Activated CD4-positive, alpha-beta T cell treated with anti-CD3 and anti-CD28 coated beads for 36 hours (primary cell): ENCODE measurements at regions of chr15 and their contacts with region 1.

Region 1: DNA sequence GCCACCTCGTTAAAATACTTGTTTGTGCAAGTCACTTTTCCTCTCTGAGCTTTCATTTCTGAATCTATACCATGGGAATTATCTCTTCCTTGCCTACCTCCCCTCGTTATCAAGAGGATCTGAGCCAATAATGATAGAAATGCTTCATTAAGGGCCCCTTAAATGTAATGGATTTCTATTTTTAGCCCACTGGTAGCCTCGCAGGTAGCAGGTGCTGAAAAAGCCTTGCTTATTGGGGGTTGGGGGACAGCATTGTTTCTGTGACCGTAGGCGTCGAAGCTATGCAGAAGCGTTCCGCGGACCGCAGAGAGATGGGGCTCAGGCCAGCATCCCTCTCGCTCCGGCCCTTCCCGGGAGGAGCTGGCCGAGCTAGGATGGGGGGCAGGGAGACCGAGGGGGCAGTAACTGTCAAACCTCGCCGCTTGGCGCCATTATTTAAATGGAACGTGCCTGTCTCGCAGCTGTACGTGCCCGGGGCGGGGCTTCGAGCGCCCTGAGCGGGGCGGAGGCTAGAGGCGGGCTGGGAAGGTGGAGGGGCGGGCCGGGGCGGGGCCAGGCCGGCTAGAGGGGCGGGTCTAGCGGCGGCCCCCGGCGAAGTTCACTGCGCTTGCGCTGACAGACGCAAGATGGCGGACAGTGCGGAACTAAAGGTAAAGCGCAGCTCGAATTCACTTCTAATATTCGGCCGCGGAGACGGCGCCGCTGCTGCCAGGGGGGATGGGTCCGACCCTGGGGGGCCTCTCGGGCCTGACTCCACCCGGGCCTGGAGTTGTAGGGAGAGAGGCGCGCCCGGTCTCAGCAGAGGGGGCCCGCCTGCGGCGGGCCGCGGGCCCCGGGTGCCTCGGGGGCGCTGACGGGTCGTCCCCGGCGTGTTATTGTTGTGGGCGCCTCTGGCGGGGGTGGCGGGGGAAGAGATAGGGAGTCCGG is at the start of gene PIAS1:
- DNase-seq: peak; percentile 98
- ATAC-seq: peak; percentile 90
- H3K4me3 Mint-ChIP-seq: peak within 1 kb of the TSS; percentile 86
- H3K27ac Mint-ChIP-seq: peak within 1 kb of the TSS; percentile 95
- H3K4me1 Mint-ChIP-seq: peaks cover 43% of the 10 kb centered on the region
- H3K27me3 Mint-ChIP-seq: peaks cover 14% of the 10 kb centered on the region
- total RNA-seq, gene PIAS1: 26.7 to 45.8 TPM

Region 2: GRCh38 chr15:66700802-66701421 is 1353.1 kb before region 1 on chr15:
- CTCF ChIA-PET with region 1: no interaction called
- POLR2A ChIA-PET with region 1: no interaction called
- intact Hi-C with region 1: loop called in 1 of 2 experiments (anchors 2 kb)
- DNase-seq: peak; percentile 93
- ATAC-seq: peak; percentile 86
- H3K4me3 Mint-ChIP-seq: peak overlapping the region; percentile 78
- H3K27ac Mint-ChIP-seq: peak overlapping the region; percentile 40
- H3K4me1 Mint-ChIP-seq: peaks cover 14% of the 10 kb centered on the region
- H3K27me3 Mint-ChIP-seq: peaks cover 16% of the 10 kb centered on the region

Region 3: GRCh38 chr15:67521029-67521811 is 532.7 kb before region 1 on chr15 and contains the start of gene C15orf61:
- CTCF ChIA-PET with region 1: no interaction called
- POLR2A ChIA-PET with region 1: no interaction called
- intact Hi-C with region 1: loop called in 1 of 2 experiments (anchors 1 kb)
- DNase-seq: peak; percentile 90
- ATAC-seq: peak; percentile 79
- H3K4me3 Mint-ChIP-seq: peak within 1 kb of the TSS; percentile 96
- H3K27ac Mint-ChIP-seq: peak within 1 kb of the TSS; percentile 98
- H3K4me1 Mint-ChIP-seq: peaks cover 21% of the 10 kb centered on the region
- H3K27me3 Mint-ChIP-seq: no peaks in the 10 kb centered on the region
- total RNA-seq, gene C15orf61: 3.4 to 5.0 TPM

Region 4: GRCh38 chr15:67863442-67863987 is 190.4 kb before region 1 on chr15:
- CTCF ChIA-PET with region 1: interaction called, 3 read pairs
- POLR2A ChIA-PET with region 1: no interaction called
- intact Hi-C with region 1: loop called in 1 of 2 experiments (anchors 2 kb)
- DNase-seq: peak; percentile 87
- ATAC-seq: peak; percentile 99
- H3K4me3 Mint-ChIP-seq: no peak overlapping the region
- H3K27ac Mint-ChIP-seq: no peak overlapping the region
- H3K4me1 Mint-ChIP-seq: peaks cover 4% of the 10 kb centered on the region
- H3K27me3 Mint-ChIP-seq: peaks cover 11% of the 10 kb centered on the region

Region 5: DNA sequence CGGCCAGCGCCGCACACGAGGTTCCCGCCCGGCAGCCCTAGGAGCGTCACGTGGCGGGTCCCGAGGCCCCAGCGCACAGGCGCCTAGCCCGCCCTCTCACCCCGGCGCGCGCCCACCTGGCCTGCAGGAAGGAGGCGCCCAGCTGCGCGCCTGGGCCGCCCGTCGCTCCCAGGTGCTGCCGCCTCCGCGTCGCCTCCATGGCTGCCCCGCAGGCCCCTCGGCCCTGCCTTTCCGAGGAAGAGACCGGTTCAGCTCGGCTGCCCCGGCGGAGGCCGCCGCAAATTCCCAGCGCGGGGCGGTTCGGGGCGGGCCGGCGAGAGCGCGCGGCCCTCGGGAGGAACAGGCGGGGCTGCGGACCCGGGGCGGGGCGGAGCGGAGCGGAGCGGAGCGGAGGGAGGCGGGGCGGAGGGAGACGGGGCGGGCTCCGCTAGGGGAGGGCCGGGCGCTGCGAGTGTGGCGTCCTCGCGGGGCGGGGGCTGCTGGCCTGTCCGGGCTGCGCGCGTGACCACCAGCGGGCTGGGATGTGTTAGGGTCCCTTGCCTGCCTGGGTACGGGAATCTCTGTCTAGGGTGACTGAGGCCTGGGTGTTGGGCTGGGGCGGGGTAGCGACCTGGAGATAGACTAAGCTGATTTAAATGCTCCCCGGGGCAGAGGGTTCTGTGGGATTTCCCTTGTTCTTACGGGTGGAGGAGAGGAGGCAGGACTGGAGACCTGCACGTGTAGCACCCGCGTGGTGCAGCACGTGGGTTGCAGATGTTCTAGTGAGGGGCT is 175.6 kb after region 1 on chr15 and contains the start of gene CLN6:
- CTCF ChIA-PET with region 1: no interaction called
- POLR2A ChIA-PET with region 1: interaction called, 9 read pairs
- intact Hi-C with region 1: loop called (anchors 1 to 2 kb)
- DNase-seq: peak; percentile 88
- ATAC-seq: peak; percentile 88
- H3K4me3 Mint-ChIP-seq: peak within 1 kb of the TSS; percentile 99
- H3K27ac Mint-ChIP-seq: peak within 1 kb of the TSS; percentile 95
- H3K4me1 Mint-ChIP-seq: peaks cover 47% of the 10 kb centered on the region
- H3K27me3 Mint-ChIP-seq: no peaks in the 10 kb centered on the region
- total RNA-seq, gene CLN6: 45.1 to 48.2 TPM

Region 6: GRCh38 chr15:68820295-68821189 is 766.6 kb after region 1 on chr15 and contains the start of gene ANP32A:
- CTCF ChIA-PET with region 1: no interaction called
- POLR2A ChIA-PET with region 1: no interaction called
- intact Hi-C with region 1: loop called in 1 of 2 experiments (anchors 2 kb)
- DNase-seq: peak; percentile 98
- ATAC-seq: peak; percentile 76
- H3K4me3 Mint-ChIP-seq: peak within 1 kb of the TSS; percentile 99
- H3K27ac Mint-ChIP-seq: peak within 1 kb of the TSS; percentile 98
- H3K4me1 Mint-ChIP-seq: peaks cover 26% of the 10 kb centered on the region
- H3K27me3 Mint-ChIP-seq: no peaks in the 10 kb centered on the region
- total RNA-seq, gene ANP32A: 252 to 439 TPM